ENCODE measurements at regions of chr2 and their contacts with region 1.

Region 1: GRCh38 chr2:42925742-42926433 is 133.5 kb upstream of the HAAO start:
- DNase-seq: no peak

Region 2: DNA sequence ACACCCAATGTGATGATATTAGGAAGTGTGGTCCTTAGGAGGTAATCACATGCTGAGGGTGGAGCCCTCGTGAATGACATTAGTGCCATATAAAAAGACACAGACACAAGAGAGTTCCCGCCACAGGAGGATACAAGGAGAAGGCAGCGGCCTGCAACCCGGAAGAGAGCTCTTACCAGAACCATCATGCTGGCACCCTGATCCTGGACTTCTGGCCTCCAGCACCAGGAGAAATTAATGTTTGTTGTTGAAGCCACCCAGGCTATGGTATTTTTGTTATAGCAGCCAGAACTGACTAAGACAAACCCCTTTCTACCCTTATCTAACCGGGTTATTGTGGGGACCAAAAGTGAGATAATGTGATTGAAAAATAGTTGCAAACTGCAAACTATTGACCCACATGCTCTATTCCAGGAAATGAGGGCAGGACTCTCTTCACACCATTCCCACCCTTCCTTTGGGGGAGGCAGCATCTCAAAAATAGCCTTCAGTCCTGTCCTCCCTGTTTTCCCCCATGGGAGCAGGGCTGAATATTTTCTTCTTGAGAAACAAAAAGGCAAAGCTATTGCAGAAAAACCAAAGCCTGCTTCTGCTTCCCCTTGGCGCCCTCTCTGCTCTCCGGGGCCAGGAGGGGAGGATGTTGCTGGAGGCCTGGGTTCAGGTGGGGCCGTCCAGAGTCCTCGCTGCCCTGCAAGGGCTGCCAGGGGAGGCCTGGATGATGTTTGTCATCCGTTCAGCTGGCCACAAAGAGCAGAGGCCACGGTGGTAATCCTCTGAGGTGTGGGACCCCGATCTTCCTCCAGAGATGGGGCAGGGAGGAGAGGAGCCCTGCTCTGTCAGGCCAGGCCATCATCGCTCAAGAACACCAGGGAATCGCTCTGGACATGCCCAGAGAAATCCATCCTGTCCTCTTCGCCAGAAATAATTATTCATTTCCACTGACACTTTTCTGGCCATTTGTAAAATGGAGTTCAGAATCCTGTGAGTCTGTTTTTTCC is 59.7 kb before region 1 on chr2:
- intact Hi-C with region 1: loop called (anchors 2 kb)
- DNase-seq: peak; percentile 77

Region 3: DNA sequence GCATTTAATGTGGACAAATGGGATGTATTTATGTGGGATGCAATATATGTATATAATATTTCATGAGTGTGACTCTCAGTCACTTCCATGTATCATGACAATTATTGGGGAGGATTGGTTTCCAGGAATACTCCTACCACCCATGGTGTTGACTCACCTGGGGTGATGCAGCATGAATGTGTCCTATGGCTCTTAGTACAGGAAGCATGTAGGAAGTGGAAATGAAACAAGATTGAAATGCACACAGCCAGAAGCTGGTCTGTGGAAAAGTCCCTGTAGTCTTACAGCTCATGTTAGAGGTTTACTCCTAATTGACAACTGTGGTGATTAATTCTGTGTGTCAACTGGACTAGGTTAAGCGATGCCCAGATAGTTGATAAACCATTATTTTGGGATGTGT is 44.2 kb before region 1 on chr2:
- intact Hi-C with region 1: loop called (anchors 2 kb)
- DNase-seq: peak; percentile 27

Region 4: GRCh38 chr2:42959234-42960001 is 33.5 kb after region 1 on chr2:
- intact Hi-C with region 1: loop called (anchors 2 kb)
- DNase-seq: no peak

Measured in cardiac septum (tissue), 1 donor.